Aorta (tissue), 5 donors: ENCODE measurements at regions of chr5 and their contacts with region 1.

Region 1: DNA sequence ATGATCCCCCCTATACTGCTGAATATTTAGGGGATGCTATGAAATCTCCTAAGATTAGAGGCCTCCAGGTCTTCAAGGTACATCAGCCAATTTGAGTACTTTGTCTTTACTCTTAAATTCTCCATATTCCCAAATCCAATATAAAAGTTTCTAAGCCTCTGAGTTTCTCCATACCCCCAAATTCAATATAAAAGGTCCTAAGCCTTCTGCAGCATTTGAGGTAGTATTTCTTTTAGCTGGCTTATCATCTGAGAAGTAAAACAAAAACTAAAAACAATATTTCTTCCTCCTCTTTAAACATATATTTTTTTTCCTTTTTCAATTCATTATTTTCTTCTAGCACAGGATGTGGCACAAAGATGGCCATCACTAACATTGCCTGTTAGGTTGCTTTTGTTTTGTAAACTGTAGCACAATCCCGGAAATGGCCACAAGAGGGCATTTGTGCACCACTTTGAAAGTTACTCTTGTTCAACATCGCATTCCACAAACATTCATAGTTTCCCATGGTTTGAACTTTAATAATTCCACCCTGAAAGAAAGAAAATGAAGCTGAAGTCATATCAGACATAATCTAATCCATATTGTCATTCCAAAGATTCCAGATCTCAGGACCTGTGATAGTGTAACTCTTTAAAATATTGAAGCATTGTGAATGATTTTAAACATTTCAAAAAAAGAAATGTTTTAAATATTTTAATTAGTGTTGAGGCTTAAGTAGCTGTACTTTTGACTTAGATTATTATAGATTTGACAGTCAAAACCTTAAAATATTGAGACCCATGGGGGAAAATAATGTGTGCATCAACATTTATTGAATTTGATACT is 21.0 kb upstream of the SCGB3A2 start:
- DNase-seq: peak in 1 of 2 donors; percentile 60
- ATAC-seq: peak; percentile 75
- H3K4me3 ChIP-seq: no peak overlapping the region
- H3K27ac ChIP-seq: no peak overlapping the region
- H3K4me1 ChIP-seq: no peaks in the 10 kb centered on the region
- H3K27me3 ChIP-seq: no peaks in the 10 kb centered on the region

Region 2: GRCh38 chr5:148113243-148113642 is 255.7 kb after region 1 on chr5:
- intact Hi-C with region 1: loop called in 1 of 2 experiments (anchors 10 kb)
- DNase-seq: no peak
- ATAC-seq: no peak
- H3K4me3 ChIP-seq: no peak overlapping the region
- H3K27ac ChIP-seq: no peak overlapping the region
- H3K4me1 ChIP-seq: no peaks in the 10 kb centered on the region
- H3K27me3 ChIP-seq: no peaks in the 10 kb centered on the region

Region 3: GRCh38 chr5:148120317-148120716 is 262.8 kb after region 1 on chr5:
- intact Hi-C with region 1: loop called (anchors 5 to 10 kb)
- DNase-seq: no peak
- ATAC-seq: no peak
- H3K4me3 ChIP-seq: no peak overlapping the region
- H3K27ac ChIP-seq: no peak overlapping the region
- H3K4me1 ChIP-seq: no peaks in the 10 kb centered on the region
- H3K27me3 ChIP-seq: no peaks in the 10 kb centered on the region